Sigmoid colon (tissue), 7 donors: ENCODE measurements at regions of chr3 and their contacts with region 1.

Region 1: DNA sequence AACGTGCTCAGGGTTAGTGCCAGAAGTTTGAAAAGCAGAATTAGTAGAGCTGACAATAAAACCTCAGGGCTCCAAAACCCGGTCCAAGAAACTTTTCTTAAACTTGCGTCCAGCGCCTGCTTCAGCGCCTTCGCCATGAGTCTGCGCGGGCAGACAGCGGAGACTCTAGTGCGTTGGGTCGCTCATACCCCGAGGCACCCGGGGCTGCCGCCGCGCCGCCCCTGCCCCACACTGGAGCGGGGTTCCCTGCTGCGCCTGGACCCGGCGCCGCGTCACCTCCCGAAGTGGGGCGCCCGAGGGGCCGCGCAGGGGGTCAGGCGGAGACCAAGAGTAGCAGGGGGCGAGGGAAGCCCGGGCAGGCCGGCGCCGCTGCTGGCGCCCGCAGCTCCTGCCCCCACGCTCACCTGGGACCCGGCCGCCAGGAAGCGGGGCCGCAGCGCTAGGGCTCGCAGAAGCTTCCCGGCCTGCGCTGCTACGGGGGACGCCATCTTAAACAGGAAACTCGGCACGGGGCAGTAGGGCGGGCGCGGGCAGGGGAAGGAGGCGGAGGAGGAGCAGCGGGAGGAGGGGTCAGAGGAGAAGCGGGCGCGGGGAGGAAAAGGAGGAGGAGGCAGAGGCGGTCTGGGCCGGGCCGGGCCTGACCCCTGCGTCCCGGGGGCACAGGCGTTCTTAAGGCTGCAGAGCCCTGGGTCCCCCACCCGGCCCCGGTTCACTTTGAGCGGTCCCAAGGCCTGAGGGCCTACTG is at the start of gene SUCLG2:
- DNase-seq: peak; percentile 96
- H3K4me3 ChIP-seq: peak within 1 kb of the TSS; percentile 84 to 98 (median 92)
- H3K27ac ChIP-seq: peak within 1 kb of the TSS; percentile 94 to 98 (median 96)
- H3K4me1 ChIP-seq: peaks cover 0 to 38% (median 19%) of the 10 kb centered on the region in 4 donors
- H3K27me3 ChIP-seq: no peaks in the 10 kb centered on the region
- CTCF ChIP-seq: no peak
- EP300 ChIP-seq: no peak
- POLR2A ChIP-seq: peak in 1 of 2 donors; percentile 40
- total RNA-seq, gene SUCLG2: 63.1 to 70.9 (median 66.9) TPM

Region 2: GRCh38 chr3:66957367-66957766 is 696.9 kb before region 1 on chr3:
- intact Hi-C with region 1: no loop called
- DNase-seq: no peak
- H3K4me3 ChIP-seq: no peak overlapping the region
- H3K27ac ChIP-seq: no peak overlapping the region
- H3K4me1 ChIP-seq: no peaks in the 10 kb centered on the region
- H3K27me3 ChIP-seq: no peaks in the 10 kb centered on the region
- CTCF ChIP-seq: no peak
- EP300 ChIP-seq: no peak
- POLR2A ChIP-seq: no peak

Region 3: DNA sequence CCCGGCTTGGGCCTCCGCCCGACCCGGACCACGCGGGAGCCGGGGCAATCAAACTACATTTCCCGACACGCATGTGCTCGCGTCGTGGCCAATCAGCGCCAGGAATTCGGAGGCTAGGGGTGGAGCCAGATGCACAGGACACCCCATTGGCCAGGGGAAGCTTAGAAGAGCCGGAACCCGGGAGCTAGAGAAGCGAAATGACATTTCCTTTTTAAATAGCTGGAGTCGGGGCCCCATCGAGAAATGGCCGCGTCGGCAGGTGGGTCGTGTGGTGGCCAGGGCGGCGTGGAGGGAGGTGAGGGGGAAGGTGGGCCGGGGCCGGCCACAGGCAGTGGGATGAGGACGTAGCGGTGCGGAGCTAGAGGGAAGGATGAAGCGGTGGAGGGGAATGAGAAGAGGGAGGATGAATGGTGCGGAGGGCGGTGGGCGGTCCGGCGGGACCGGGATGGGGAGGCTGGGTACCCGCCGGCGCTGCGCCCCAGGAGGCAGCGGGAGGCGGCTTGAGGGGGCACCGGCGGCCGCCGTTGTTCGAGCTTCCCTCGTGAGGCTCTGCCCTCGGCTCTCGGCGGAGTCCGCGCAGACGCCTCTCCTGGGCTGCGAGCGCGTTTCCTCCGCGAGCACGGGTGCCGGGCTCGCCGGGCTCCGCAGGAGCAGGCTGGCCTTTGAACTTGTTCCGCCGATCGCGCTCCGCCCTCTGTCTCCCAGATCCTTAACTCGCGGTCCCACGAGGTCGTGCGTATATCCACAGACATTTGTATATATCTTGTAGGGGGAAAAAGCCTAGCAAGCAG is 656.0 kb before region 1 on chr3 and contains the start of gene KBTBD8:
- intact Hi-C with region 1: loop called (anchors 10 kb)
- DNase-seq: peak; percentile 99
- H3K4me3 ChIP-seq: peak within 1 kb of the TSS; percentile 78 to 93 (median 88)
- H3K27ac ChIP-seq: peak within 1 kb of the TSS; percentile 79 to 90 (median 88)
- H3K4me1 ChIP-seq: peaks cover 0 to 16% (median 9%) of the 10 kb centered on the region in 4 donors
- H3K27me3 ChIP-seq: no peaks in the 10 kb centered on the region
- CTCF ChIP-seq: no peak
- EP300 ChIP-seq: no peak
- POLR2A ChIP-seq: peak; percentile 20 to 36
- total RNA-seq, gene KBTBD8: 0.55 to 3.4 (median 1.4) TPM

Region 4: DNA sequence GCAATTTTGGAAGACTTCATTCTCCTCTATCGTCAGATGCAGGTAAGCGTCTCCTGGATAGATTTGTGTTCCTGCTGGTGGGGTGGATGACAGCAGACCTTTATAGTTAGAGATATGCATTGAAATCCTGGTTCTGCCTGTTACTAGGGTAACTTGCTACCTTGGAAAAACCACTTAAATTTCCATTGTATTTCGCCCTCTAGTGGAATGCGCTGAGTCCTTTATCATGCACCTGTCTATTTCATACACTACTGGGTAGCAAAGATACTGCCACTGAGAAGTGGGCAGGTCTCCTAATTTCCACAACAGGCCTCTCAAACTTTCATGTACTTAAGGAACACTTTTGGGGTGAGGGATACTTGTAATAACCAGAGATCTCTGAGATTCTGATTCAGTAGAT is 209.6 kb after region 1 on chr3:
- intact Hi-C with region 1: no loop called
- DNase-seq: no peak
- H3K4me3 ChIP-seq: no peak overlapping the region
- H3K27ac ChIP-seq: no peak overlapping the region
- H3K4me1 ChIP-seq: no peaks in the 10 kb centered on the region
- H3K27me3 ChIP-seq: no peaks in the 10 kb centered on the region
- CTCF ChIP-seq: no peak
- EP300 ChIP-seq: no peak
- POLR2A ChIP-seq: no peak